Colonic mucosa (tissue), 4 donors: ENCODE measurements at regions of chr11 and their contacts with region 1.

Region 1: GRCh38 chr11:35617687-35618496 is at the start of gene FJX1:
- DNase-seq: peak; percentile 21
- H3K4me3 ChIP-seq: peak within 1 kb of the TSS; percentile 36
- H3K27ac ChIP-seq: peak within 1 kb of the TSS; percentile 41
- H3K4me1 ChIP-seq: peaks cover 8% of the 10 kb centered on the region
- H3K27me3 ChIP-seq: peaks cover 40% of the 10 kb centered on the region
- CTCF ChIP-seq: no peak
- total RNA-seq, gene FJX1: 0.32 to 1.6 TPM

Region 2: GRCh38 chr11:35458846-35459245 is 159.0 kb before region 1 on chr11:
- intact Hi-C with region 1: no loop called
- DNase-seq: no peak
- H3K4me3 ChIP-seq: no peak overlapping the region
- H3K27ac ChIP-seq: no peak overlapping the region
- H3K4me1 ChIP-seq: no peaks in the 10 kb centered on the region
- H3K27me3 ChIP-seq: no peaks in the 10 kb centered on the region
- CTCF ChIP-seq: no peak

Region 3: GRCh38 chr11:35671396-35672127 is 53.7 kb after region 1 on chr11:
- intact Hi-C with region 1: no loop called
- DNase-seq: no peak
- H3K4me3 ChIP-seq: no peak overlapping the region
- H3K27ac ChIP-seq: no peak overlapping the region
- H3K4me1 ChIP-seq: no peaks in the 10 kb centered on the region
- H3K27me3 ChIP-seq: no peaks in the 10 kb centered on the region
- CTCF ChIP-seq: no peak

Region 4: DNA sequence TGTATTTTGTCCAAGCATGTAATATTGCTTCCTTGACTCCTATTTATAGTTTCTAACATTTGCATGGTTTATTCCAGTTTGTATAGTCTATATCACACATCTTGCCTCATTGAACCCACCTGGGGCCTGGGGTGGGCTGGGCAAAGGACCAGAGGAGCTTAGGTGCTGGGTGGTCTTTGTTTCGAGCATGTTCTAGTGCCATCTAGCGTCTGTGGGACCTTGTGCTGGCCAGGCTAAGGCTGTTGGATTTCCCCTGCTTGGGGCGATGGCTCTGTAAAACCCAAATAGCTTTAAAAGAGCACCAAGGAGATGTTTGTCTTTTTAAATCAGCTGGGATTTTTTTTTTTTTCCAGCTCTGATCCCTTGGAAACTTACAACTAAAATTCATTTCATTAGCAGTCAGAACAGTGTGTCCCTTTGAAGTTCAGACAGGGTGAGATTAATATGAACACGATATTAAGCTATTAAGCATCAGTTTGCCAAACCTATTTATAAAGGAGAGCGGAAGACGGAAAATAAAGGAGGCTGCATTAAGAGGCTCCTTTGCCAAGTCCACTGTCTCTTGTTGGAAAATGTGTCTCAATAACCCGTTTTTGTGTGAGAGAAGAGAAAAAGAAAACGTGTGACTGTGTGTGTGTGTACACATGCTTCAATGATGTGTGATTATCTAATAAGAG is 514.0 kb after region 1 on chr11:
- intact Hi-C with region 1: loop called (anchors 10 kb)
- DNase-seq: peak; percentile 27
- H3K4me3 ChIP-seq: no peak overlapping the region
- H3K27ac ChIP-seq: no peak overlapping the region
- H3K4me1 ChIP-seq: no peaks in the 10 kb centered on the region
- H3K27me3 ChIP-seq: no peaks in the 10 kb centered on the region
- CTCF ChIP-seq: no peak